ENCODE measurements at regions of chr2 and their contacts with region 1.

Region 1: DNA sequence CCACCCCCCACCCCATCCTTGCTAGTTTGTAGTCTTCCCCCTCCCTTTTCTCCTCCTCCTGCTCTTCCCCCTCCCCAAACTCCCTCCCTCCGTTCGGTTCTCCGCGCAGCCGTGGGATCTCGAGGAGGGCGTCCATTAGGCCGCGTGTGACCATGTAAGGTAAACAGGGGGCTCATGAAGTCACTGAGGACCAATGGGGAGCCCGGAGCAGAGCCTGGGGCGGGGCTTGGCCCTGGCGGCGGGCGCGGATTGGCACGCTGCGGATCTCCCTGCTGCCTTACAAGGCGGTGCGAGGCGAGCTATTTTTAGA is 246 bp upstream of the KLF7 start:
- DNase-seq: peak; percentile 100
- ATAC-seq: peak; percentile 86
- H3K4me3 ChIP-seq: peak overlapping the region; percentile 64
- H3K27ac ChIP-seq: no peak overlapping the region
- H3K4me1 ChIP-seq: peaks cover 7% of the 10 kb centered on the region
- H3K27me3 ChIP-seq: no peaks in the 10 kb centered on the region
- CTCF ChIP-seq: no peak
- POLR2A ChIP-seq: no peak
- RAD21 ChIP-seq: no peak

Region 2: GRCh38 chr2:206800506-206801417 is 365.2 kb before region 1 on chr2:
- CTCF ChIA-PET with region 1: no interaction called
- POLR2A ChIA-PET with region 1: no interaction called
- dilution Hi-C with region 1: no loop called
- in situ Hi-C with region 1: no loop called
- intact Hi-C with region 1: loop called (anchors 1 kb)
- DNase-seq: peak; percentile 76
- ATAC-seq: peak; percentile 82
- H3K4me3 ChIP-seq: no peak overlapping the region
- H3K27ac ChIP-seq: no peak overlapping the region
- H3K4me1 ChIP-seq: no peaks in the 10 kb centered on the region
- H3K27me3 ChIP-seq: no peaks in the 10 kb centered on the region
- CTCF ChIP-seq: peak; percentile 76
- POLR2A ChIP-seq: no peak
- RAD21 ChIP-seq: peak; percentile 90

Region 3: GRCh38 chr2:207073801-207074678 is 92.0 kb before region 1 on chr2:
- CTCF ChIA-PET with region 1: no interaction called
- POLR2A ChIA-PET with region 1: no interaction called
- dilution Hi-C with region 1: no loop called
- in situ Hi-C with region 1: no loop called
- intact Hi-C with region 1: loop called (anchors 2 kb)
- DNase-seq: peak; percentile 12
- ATAC-seq: peak; percentile 48
- H3K4me3 ChIP-seq: no peak overlapping the region
- H3K27ac ChIP-seq: no peak overlapping the region
- H3K4me1 ChIP-seq: 0 out of 2 replicates have a peak, but pooled peaks cover 2% of the 10 kb centered on the region
- H3K27me3 ChIP-seq: no peaks in the 10 kb centered on the region
- CTCF ChIP-seq: no peak
- POLR2A ChIP-seq: no peak; the same call in none of the 2 replicates
- RAD21 ChIP-seq: no peak

Region 4: GRCh38 chr2:207238831-207239701 is 73.1 kb after region 1 on chr2:
- CTCF ChIA-PET with region 1: interaction called, 3 read pairs
- POLR2A ChIA-PET with region 1: interaction called, 20 read pairs
- dilution Hi-C with region 1: no loop called
- in situ Hi-C with region 1: loop called (anchors 5 kb)
- intact Hi-C with region 1: loop called (anchors 1 kb)
- DNase-seq: peak; percentile 100
- ATAC-seq: peak; percentile 91
- H3K4me3 ChIP-seq: no peak overlapping the region
- H3K27ac ChIP-seq: peak overlapping the region; percentile 95
- H3K4me1 ChIP-seq: peaks cover 20% of the 10 kb centered on the region
- H3K27me3 ChIP-seq: no peaks in the 10 kb centered on the region
- CTCF ChIP-seq: no peak
- POLR2A ChIP-seq: peak; percentile 68; the same call in 1 of the 2 replicates
- RAD21 ChIP-seq: peak; percentile 13; the same call in 1 of the 2 replicates

Region 5: GRCh38 chr2:207334624-207335371 is 168.8 kb after region 1 on chr2:
- CTCF ChIA-PET with region 1: no interaction called
- POLR2A ChIA-PET with region 1: interaction called, 11 read pairs
- dilution Hi-C with region 1: no loop called
- in situ Hi-C with region 1: no loop called
- intact Hi-C with region 1: loop called (anchors 1 kb)
- DNase-seq: peak; percentile 100
- ATAC-seq: peak; percentile 79
- H3K4me3 ChIP-seq: peak overlapping the region; percentile 24
- H3K27ac ChIP-seq: peak overlapping the region; percentile 67
- H3K4me1 ChIP-seq: peaks cover 14% of the 10 kb centered on the region
- H3K27me3 ChIP-seq: no peaks in the 10 kb centered on the region
- CTCF ChIP-seq: no peak
- POLR2A ChIP-seq: peak; percentile 86
- RAD21 ChIP-seq: no peak; the same call in none of the 2 replicates

Region 6: GRCh38 chr2:207619764-207620203 is 453.8 kb after region 1 on chr2:
- CTCF ChIA-PET with region 1: no interaction called
- POLR2A ChIA-PET with region 1: no interaction called
- dilution Hi-C with region 1: no loop called
- in situ Hi-C with region 1: no loop called
- intact Hi-C with region 1: loop called (anchors 5 kb)
- DNase-seq: no peak
- ATAC-seq: no peak
- H3K4me3 ChIP-seq: no peak overlapping the region
- H3K27ac ChIP-seq: no peak overlapping the region
- H3K4me1 ChIP-seq: peaks cover 12% of the 10 kb centered on the region
- H3K27me3 ChIP-seq: no peaks in the 10 kb centered on the region
- CTCF ChIP-seq: no peak
- POLR2A ChIP-seq: no peak
- RAD21 ChIP-seq: no peak

Measured in IMR-90 (cell line).